IMR-90 (cell line): ENCODE measurements at regions of chr4 and their contacts with region 1.

Region 1: GRCh38 chr4:141636082-141636770 is at the start of gene IL15:
- DNase-seq: peak; percentile 58
- ATAC-seq: peak; percentile 77
- H3K4me3 ChIP-seq: peak within 1 kb of the TSS; percentile 85
- H3K27ac ChIP-seq: peak within 1 kb of the TSS; percentile 84
- H3K4me1 ChIP-seq: no peaks in the 10 kb centered on the region
- H3K27me3 ChIP-seq: no peaks in the 10 kb centered on the region
- CTCF ChIP-seq: no peak
- POLR2A ChIP-seq: no peak
- RAD21 ChIP-seq: no peak
- total RNA-seq, gene IL15: 5.2 and 5.8 TPM in 2 replicates

Region 2: DNA sequence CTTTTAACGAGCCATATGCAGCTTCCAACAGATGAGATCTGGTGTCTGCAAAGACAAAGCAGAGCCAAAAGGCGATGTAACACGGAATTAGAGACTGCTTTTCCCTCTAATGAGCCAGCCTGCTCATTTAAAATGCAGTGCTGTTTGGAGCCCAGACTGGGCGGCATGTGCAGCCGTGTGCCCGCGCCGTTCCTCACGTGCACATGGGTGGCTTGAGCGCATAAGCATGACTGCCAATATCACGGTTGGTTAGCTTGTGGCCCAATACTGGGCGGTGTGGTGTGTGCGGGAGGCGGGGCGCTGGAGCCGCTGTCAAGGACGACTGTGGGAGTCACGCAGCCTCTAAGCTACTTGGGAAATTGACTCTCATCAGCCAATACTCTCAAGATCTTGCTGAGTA is 1349.8 kb before region 1 on chr4:
- CTCF ChIA-PET with region 1: no interaction called
- POLR2A ChIA-PET with region 1: no interaction called
- dilution Hi-C with region 1: no loop called
- in situ Hi-C with region 1: no loop called
- intact Hi-C with region 1: no loop called
- DNase-seq: no peak
- ATAC-seq: no peak
- H3K4me3 ChIP-seq: no peak overlapping the region
- H3K27ac ChIP-seq: no peak overlapping the region
- H3K4me1 ChIP-seq: no peaks in the 10 kb centered on the region
- H3K27me3 ChIP-seq: peaks cover 34% of the 10 kb centered on the region
- CTCF ChIP-seq: no peak
- POLR2A ChIP-seq: no peak
- RAD21 ChIP-seq: no peak

Region 3: DNA sequence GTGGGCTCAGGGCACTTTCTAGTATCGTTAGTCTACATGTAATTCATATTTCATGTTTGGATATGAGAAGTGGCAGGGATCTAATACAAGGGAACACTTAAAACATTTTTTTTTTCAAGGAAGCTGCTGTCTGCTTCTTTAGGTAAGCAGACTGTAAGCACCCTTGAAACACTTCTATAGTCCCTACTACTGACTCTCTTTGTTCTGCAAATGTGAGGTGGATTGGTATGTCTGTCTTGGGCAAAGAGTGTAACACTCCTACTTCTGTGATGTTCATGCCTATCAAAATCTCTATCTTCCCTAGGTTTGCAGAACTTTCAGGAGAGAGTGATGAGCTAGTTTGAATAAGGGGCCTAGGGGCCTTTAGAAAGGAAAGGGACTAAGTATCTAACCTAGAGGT is 321.6 kb before region 1 on chr4:
- CTCF ChIA-PET with region 1: no interaction called
- POLR2A ChIA-PET with region 1: no interaction called
- dilution Hi-C with region 1: no loop called
- in situ Hi-C with region 1: no loop called
- intact Hi-C with region 1: no loop called
- DNase-seq: no peak
- ATAC-seq: no peak
- H3K4me3 ChIP-seq: no peak overlapping the region
- H3K27ac ChIP-seq: no peak overlapping the region
- H3K4me1 ChIP-seq: no peaks in the 10 kb centered on the region
- H3K27me3 ChIP-seq: no peaks in the 10 kb centered on the region
- CTCF ChIP-seq: no peak
- POLR2A ChIP-seq: no peak
- RAD21 ChIP-seq: no peak

Region 4: DNA sequence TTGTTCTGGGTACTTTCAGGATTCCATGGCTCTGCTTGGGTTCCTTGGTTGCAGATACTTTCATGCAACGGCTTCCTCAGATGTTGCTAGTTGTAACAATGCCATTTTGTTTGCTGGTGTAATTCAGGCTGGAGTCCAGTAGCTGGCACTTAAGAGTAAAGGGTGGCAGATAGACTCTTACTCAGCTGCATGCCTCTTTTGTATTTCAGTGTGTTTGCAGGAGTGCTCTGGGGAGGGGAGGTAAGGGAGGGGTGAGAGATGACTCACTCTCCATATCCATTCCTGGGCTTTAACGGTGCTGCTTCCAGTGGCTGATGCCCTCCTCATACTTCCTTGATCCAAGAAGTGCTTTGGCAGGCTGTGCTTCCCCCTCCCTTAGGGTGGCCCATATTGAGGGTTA is 260.4 kb before region 1 on chr4:
- CTCF ChIA-PET with region 1: no interaction called
- POLR2A ChIA-PET with region 1: no interaction called
- dilution Hi-C with region 1: no loop called
- in situ Hi-C with region 1: no loop called
- intact Hi-C with region 1: loop called (anchors 2 kb)
- DNase-seq: peak; percentile 93
- ATAC-seq: peak; percentile 99
- H3K4me3 ChIP-seq: no peak overlapping the region
- H3K27ac ChIP-seq: no peak overlapping the region
- H3K4me1 ChIP-seq: peaks cover 4% of the 10 kb centered on the region
- H3K27me3 ChIP-seq: no peaks in the 10 kb centered on the region
- CTCF ChIP-seq: peak; percentile 79
- POLR2A ChIP-seq: no peak
- RAD21 ChIP-seq: peak; percentile 93

Region 5: GRCh38 chr4:141625023-141625422 is 11.2 kb before region 1 on chr4:
- CTCF ChIA-PET with region 1: no interaction called
- POLR2A ChIA-PET with region 1: no interaction called
- dilution Hi-C with region 1: no loop called
- in situ Hi-C with region 1: no loop called
- intact Hi-C with region 1: no loop called
- DNase-seq: no peak
- ATAC-seq: no peak
- H3K4me3 ChIP-seq: no peak overlapping the region
- H3K27ac ChIP-seq: no peak overlapping the region
- H3K4me1 ChIP-seq: no peaks in the 10 kb centered on the region
- H3K27me3 ChIP-seq: no peaks in the 10 kb centered on the region
- CTCF ChIP-seq: no peak
- POLR2A ChIP-seq: no peak
- RAD21 ChIP-seq: no peak

Region 6: GRCh38 chr4:141711014-141711610 is 74.9 kb after region 1 on chr4:
- CTCF ChIA-PET with region 1: no interaction called
- POLR2A ChIA-PET with region 1: no interaction called
- dilution Hi-C with region 1: no loop called
- in situ Hi-C with region 1: no loop called
- intact Hi-C with region 1: loop called (anchors 2 kb)
- DNase-seq: peak; percentile 51
- ATAC-seq: peak; percentile 63; the same call in 1 of the 2 replicates
- H3K4me3 ChIP-seq: no peak overlapping the region
- H3K27ac ChIP-seq: no peak overlapping the region
- H3K4me1 ChIP-seq: peaks cover 9% of the 10 kb centered on the region
- H3K27me3 ChIP-seq: no peaks in the 10 kb centered on the region
- CTCF ChIP-seq: peak; percentile 70
- POLR2A ChIP-seq: no peak
- RAD21 ChIP-seq: peak; percentile 72

Region 7: GRCh38 chr4:142840516-142841123 is 1204.4 kb after region 1 on chr4:
- CTCF ChIA-PET with region 1: no interaction called
- POLR2A ChIA-PET with region 1: no interaction called
- dilution Hi-C with region 1: no loop called
- in situ Hi-C with region 1: no loop called
- intact Hi-C with region 1: loop called (anchors 5 kb)
- DNase-seq: peak; percentile 68
- ATAC-seq: no peak
- H3K4me3 ChIP-seq: no peak overlapping the region
- H3K27ac ChIP-seq: no peak overlapping the region
- H3K4me1 ChIP-seq: peaks cover 2% of the 10 kb centered on the region; the same call in 1 of the 2 replicates
- H3K27me3 ChIP-seq: no peaks in the 10 kb centered on the region
- CTCF ChIP-seq: peak; percentile 83
- POLR2A ChIP-seq: no peak
- RAD21 ChIP-seq: peak; percentile 77